IMR-90 (cell line): ENCODE measurements at regions of chr15 and their contacts with region 1.

Region 1: GRCh38 chr15:65275728-65276126 is 11.0 kb downstream of the PARP16 start:
- DNase-seq: peak; percentile 70
- ATAC-seq: peak; percentile 28; the same call in 1 of the 2 replicates
- H3K4me3 ChIP-seq: no peak overlapping the region
- H3K27ac ChIP-seq: no peak overlapping the region
- H3K4me1 ChIP-seq: peaks cover 6% of the 10 kb centered on the region
- H3K27me3 ChIP-seq: no peaks in the 10 kb centered on the region
- CTCF ChIP-seq: no peak
- POLR2A ChIP-seq: no peak
- RAD21 ChIP-seq: no peak

Region 2: DNA sequence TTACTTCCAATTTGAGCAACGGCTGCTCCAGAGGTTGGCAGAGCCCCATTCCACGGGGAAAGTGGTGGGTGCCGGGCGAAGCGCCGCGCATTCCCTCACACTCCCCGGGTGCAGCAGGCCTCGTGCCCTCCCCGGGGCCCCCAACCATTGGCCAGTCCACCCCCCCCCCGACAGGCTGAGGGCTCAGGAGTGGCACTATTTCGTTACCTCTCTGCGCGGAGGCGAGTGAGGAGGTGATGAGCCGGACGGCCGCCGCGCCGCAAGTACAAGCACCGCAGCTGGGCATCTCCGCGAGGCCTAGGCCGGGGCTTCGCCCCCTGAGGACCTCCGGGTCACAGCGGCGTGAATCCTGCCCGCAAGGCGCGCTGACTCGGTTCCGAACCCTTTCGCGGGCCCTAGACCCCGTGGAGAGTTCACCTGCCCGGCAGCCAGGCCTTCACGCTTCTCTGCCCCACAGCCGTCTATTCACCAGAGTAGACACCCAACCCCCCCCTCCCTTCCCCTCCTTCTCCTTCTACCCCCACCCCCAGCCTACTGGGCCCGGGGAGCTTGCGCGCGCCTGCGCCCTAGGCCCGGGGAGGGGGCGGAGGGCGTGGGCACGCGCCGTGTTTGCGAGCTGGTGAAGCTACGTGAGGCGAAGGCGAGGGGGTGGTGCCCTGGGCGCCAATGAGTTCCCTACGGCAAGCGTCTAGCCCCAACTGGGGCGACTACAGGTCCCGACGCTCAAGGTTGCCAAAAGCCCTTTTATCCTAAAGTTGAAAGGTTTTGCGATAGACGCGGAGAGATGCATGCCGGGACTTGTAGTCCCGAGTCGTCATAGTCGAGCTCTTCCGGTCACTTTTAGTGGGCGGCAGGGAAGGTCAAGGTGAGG is 90.6 kb before region 1 on chr15 and contains the start of gene CLPX:
- CTCF ChIA-PET with region 1: interaction called, 7 read pairs
- POLR2A ChIA-PET with region 1: no interaction called
- dilution Hi-C with region 1: no loop called
- in situ Hi-C with region 1: no loop called
- intact Hi-C with region 1: loop called (anchors 1 kb)
- DNase-seq: peak; percentile 89
- ATAC-seq: peak; percentile 91
- H3K4me3 ChIP-seq: peak within 1 kb of the TSS; percentile 87
- H3K27ac ChIP-seq: peak within 1 kb of the TSS; percentile 94
- H3K4me1 ChIP-seq: no peaks in the 10 kb centered on the region
- H3K27me3 ChIP-seq: no peaks in the 10 kb centered on the region
- CTCF ChIP-seq: no peak
- POLR2A ChIP-seq: peak; percentile 76
- RAD21 ChIP-seq: no peak
- total RNA-seq, gene CLPX: 25.8 and 29.4 TPM in 2 replicates

Region 3: DNA sequence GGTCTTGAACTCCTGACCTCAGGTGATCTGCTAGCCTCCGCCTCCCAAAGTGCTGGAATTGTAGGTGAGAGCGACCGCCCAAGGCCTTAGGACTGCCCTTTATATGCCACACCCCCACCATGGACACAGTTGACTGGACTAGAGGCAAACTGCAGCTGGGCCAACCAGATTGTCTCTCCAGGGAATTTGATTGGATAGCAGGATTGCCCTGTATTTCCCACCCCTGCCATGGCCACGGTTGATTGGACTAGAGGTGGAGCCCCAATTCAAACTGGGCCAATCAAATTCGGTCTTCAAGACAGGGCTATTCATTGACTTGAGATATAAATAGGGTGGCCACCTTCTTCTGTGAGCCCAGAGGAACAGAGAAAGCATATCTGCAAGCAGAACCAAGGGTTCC is 83.7 kb before region 1 on chr15:
- CTCF ChIA-PET with region 1: interaction called, 5 read pairs
- POLR2A ChIA-PET with region 1: no interaction called
- dilution Hi-C with region 1: no loop called
- in situ Hi-C with region 1: loop called (anchors 5 kb)
- intact Hi-C with region 1: loop called (anchors 1 kb)
- DNase-seq: peak; percentile 13
- ATAC-seq: no peak; the same call in 1 of the 2 replicates
- H3K4me3 ChIP-seq: no peak overlapping the region
- H3K27ac ChIP-seq: no peak overlapping the region
- H3K4me1 ChIP-seq: no peaks in the 10 kb centered on the region
- H3K27me3 ChIP-seq: peaks cover 18% of the 10 kb centered on the region
- CTCF ChIP-seq: no peak
- POLR2A ChIP-seq: no peak
- RAD21 ChIP-seq: no peak

Region 4: DNA sequence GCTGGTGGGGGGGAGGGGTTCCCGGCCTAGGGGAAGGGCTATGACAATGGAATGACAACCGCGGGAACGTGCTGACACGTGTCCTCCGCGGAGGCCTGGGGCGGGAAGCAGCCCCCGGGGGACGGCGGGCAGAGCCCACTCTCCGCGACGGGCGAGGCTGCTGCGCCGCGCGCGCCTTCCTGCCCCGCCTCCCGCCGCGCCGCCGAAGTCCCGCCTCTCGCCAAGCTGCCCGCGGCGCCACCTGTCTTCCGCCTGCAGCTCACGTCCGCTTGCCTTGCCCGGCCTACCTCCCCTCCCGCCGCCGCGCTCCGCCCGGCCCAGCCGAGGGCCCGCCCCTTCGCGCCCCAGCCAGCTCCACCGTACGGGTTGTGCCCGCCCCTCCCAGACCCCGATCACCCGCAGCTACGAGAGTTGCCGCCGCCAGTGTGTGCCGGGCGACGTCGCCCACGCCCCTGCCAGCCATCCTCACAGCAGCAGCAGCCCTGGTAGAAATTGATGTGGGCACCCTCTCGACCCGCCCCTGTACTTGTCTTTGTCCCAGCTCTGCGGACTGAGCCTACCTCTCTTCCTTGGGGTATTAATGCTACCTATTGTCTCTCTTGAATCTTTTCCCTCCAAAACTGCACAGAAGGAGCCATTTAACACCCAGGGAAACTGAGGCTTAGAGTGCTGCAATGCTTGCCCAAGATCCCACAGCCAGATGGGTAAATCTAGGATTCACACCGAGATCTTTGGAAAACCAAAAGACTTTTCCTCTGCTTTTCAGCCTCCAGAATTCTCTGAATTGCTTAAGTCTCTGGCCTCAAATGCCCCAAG is 11.2 kb after region 1 on chr15 and contains the start of gene PARP16:
- CTCF ChIA-PET with region 1: interaction called, 13 read pairs
- POLR2A ChIA-PET with region 1: no interaction called
- dilution Hi-C with region 1: no loop called
- in situ Hi-C with region 1: no loop called
- intact Hi-C with region 1: no loop called
- DNase-seq: peak; percentile 72
- ATAC-seq: peak; percentile 95
- H3K4me3 ChIP-seq: peak within 1 kb of the TSS; percentile 84
- H3K27ac ChIP-seq: peak within 1 kb of the TSS; percentile 14
- H3K4me1 ChIP-seq: peaks cover 11% of the 10 kb centered on the region
- H3K27me3 ChIP-seq: peaks cover 5% of the 10 kb centered on the region
- CTCF ChIP-seq: peak; percentile 42
- POLR2A ChIP-seq: no peak
- RAD21 ChIP-seq: no peak
- total RNA-seq, gene PARP16: 1.3 and 1.7 TPM in 2 replicates

Region 5: GRCh38 chr15:65400760-65401610 is 125.3 kb after region 1 on chr15:
- CTCF ChIA-PET with region 1: no interaction called
- POLR2A ChIA-PET with region 1: no interaction called
- dilution Hi-C with region 1: no loop called
- in situ Hi-C with region 1: no loop called
- intact Hi-C with region 1: no loop called
- DNase-seq: peak; percentile 72
- ATAC-seq: peak; percentile 93
- H3K4me3 ChIP-seq: no peak overlapping the region
- H3K27ac ChIP-seq: no peak overlapping the region
- H3K4me1 ChIP-seq: no peaks in the 10 kb centered on the region
- H3K27me3 ChIP-seq: peaks cover 16% of the 10 kb centered on the region; the same call in 1 of the 2 replicates
- CTCF ChIP-seq: peak; percentile 72
- POLR2A ChIP-seq: no peak
- RAD21 ChIP-seq: peak; percentile 80